ENCODE measurements at regions of chr1 and their contacts with region 1.

Region 1: GRCh38 chr1:65067491-65068201 is 80.4 kb upstream of the AK4 start:
- DNase-seq: peak; percentile 25
- H3K4me3 Mint-ChIP-seq: peak overlapping the region; percentile 89
- H3K27ac Mint-ChIP-seq: peak overlapping the region; percentile 95
- H3K4me1 Mint-ChIP-seq: peaks cover 41% of the 10 kb centered on the region
- H3K27me3 Mint-ChIP-seq: no peaks in the 10 kb centered on the region

Region 2: DNA sequence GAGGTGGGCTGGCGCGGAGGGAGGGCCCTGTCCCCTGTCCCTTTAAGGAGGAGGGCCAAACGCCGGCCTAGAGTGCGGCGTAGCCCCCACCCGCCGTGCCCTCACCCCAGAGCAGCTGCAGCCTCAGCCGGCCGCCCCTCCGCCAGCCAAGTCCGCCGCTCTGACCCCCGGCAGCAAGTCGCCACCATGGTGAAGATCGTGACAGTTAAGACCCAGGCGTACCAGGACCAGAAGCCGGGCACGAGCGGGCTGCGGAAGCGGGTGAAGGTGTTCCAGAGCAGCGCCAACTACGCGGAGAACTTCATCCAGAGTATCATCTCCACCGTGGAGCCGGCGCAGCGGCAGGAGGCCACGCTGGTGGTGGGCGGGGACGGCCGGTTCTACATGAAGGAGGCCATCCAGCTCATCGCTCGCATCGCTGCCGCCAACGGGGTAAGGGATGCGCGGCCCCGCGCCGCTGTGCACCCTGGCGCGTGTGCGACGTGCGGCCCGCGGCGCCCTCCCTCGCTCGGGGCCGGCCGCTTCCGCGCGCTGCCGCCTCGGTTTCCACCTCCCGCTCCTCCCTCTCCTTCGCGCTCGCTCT is 1474.3 kb before region 1 on chr1 and contains the start of gene PGM1:
- intact Hi-C with region 1: loop called (anchors 5 kb)
- DNase-seq: peak; percentile 68
- H3K4me3 Mint-ChIP-seq: peak within 1 kb of the TSS; percentile 95
- H3K27ac Mint-ChIP-seq: peak within 1 kb of the TSS; percentile 98
- H3K4me1 Mint-ChIP-seq: peaks cover 44% of the 10 kb centered on the region
- H3K27me3 Mint-ChIP-seq: no peaks in the 10 kb centered on the region
- total RNA-seq, gene PGM1: 38.9 and 39.8 TPM in 2 replicates

Region 3: GRCh38 chr1:64711266-64711665 is 356.4 kb before region 1 on chr1:
- intact Hi-C with region 1: no loop called
- DNase-seq: no peak
- H3K4me3 Mint-ChIP-seq: no peak overlapping the region
- H3K27ac Mint-ChIP-seq: no peak overlapping the region
- H3K4me1 Mint-ChIP-seq: no peaks in the 10 kb centered on the region
- H3K27me3 Mint-ChIP-seq: peaks cover 4% of the 10 kb centered on the region

Region 4: GRCh38 chr1:64973061-64973647 is 94.5 kb before region 1 on chr1:
- intact Hi-C with region 1: no loop called
- DNase-seq: no peak
- H3K4me3 Mint-ChIP-seq: no peak overlapping the region
- H3K27ac Mint-ChIP-seq: no peak overlapping the region
- H3K4me1 Mint-ChIP-seq: peaks cover 2% of the 10 kb centered on the region
- H3K27me3 Mint-ChIP-seq: peaks cover 7% of the 10 kb centered on the region

Region 5: GRCh38 chr1:65002508-65003315 is 64.9 kb before region 1 on chr1:
- intact Hi-C with region 1: loop called (anchors 2 kb)
- DNase-seq: peak; percentile 58
- H3K4me3 Mint-ChIP-seq: peak overlapping the region; percentile 74
- H3K27ac Mint-ChIP-seq: peak overlapping the region; percentile 25
- H3K4me1 Mint-ChIP-seq: peaks cover 25% of the 10 kb centered on the region
- H3K27me3 Mint-ChIP-seq: peaks cover 23% of the 10 kb centered on the region

Region 6: GRCh38 chr1:65020774-65021173 is 46.9 kb before region 1 on chr1:
- intact Hi-C with region 1: no loop called
- DNase-seq: no peak
- H3K4me3 Mint-ChIP-seq: no peak overlapping the region
- H3K27ac Mint-ChIP-seq: no peak overlapping the region
- H3K4me1 Mint-ChIP-seq: no peaks in the 10 kb centered on the region
- H3K27me3 Mint-ChIP-seq: peaks cover 4% of the 10 kb centered on the region

Region 7: DNA sequence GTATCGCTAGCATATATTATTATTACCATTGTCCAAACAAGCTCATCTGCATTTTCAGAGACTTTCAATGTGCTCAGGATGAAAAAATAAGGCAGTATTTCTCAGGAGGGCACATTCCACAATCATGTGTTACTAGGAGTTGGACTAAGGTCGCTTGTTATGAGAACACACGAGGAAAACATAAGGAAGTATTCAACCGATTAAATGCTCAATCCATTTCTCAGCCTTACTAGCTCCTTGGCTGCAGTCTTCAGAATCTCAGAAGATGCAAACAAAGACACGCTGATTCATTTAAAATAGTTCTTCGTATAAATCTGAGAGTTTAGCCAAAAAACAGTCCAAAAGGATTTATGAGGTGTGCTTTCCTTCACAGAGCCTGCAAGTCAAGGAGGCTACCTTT is 19.3 kb before region 1 on chr1:
- intact Hi-C with region 1: no loop called
- DNase-seq: no peak
- H3K4me3 Mint-ChIP-seq: no peak overlapping the region
- H3K27ac Mint-ChIP-seq: no peak overlapping the region
- H3K4me1 Mint-ChIP-seq: peaks cover 39% of the 10 kb centered on the region
- H3K27me3 Mint-ChIP-seq: peaks cover 6% of the 10 kb centered on the region

Region 8: GRCh38 chr1:65254319-65255034 is 186.8 kb after region 1 on chr1:
- intact Hi-C with region 1: loop called (anchors 2 kb)
- DNase-seq: peak; percentile 83
- H3K4me3 Mint-ChIP-seq: peak overlapping the region; percentile 93
- H3K27ac Mint-ChIP-seq: peak overlapping the region; percentile 40
- H3K4me1 Mint-ChIP-seq: peaks cover 34% of the 10 kb centered on the region
- H3K27me3 Mint-ChIP-seq: peaks cover 23% of the 10 kb centered on the region

Region 9: GRCh38 chr1:66446261-66447001 is 1378.8 kb after region 1 on chr1:
- intact Hi-C with region 1: loop called (anchors 5 kb)
- DNase-seq: peak; percentile 39
- H3K4me3 Mint-ChIP-seq: peak overlapping the region; percentile 56
- H3K27ac Mint-ChIP-seq: peak overlapping the region; percentile 95
- H3K4me1 Mint-ChIP-seq: peaks cover 32% of the 10 kb centered on the region
- H3K27me3 Mint-ChIP-seq: peaks cover 3% of the 10 kb centered on the region